Ascending aorta (tissue), 2 donors: ENCODE measurements at regions of chr19 and their contacts with region 1.

Region 1: GRCh38 chr19:49210108-49210900 is 52.7 kb downstream of the TRPM4 start:
- DNase-seq: no peak
- H3K4me3 ChIP-seq: no peak overlapping the region
- H3K27ac ChIP-seq: no peak overlapping the region
- H3K4me1 ChIP-seq: peaks cover 0 to 3% of the 10 kb centered on the region in 2 donors
- H3K27me3 ChIP-seq: no peaks in the 10 kb centered on the region
- CTCF ChIP-seq: no peak

Region 2: GRCh38 chr19:49017666-49018351 is 192.5 kb before region 1 on chr19:
- intact Hi-C with region 1: no loop called
- DNase-seq: peak in 1 of 2 donors; percentile 77
- H3K4me3 ChIP-seq: peak overlapping the region; percentile 56 to 65
- H3K27ac ChIP-seq: no peak overlapping the region
- H3K4me1 ChIP-seq: peaks cover 8 to 18% of the 10 kb centered on the region in 2 donors
- H3K27me3 ChIP-seq: peaks cover 9% of the 10 kb centered on the region
- CTCF ChIP-seq: peak; percentile 34 to 56 (median 39)

Region 3: GRCh38 chr19:49073514-49074378 is 136.6 kb before region 1 on chr19:
- intact Hi-C with region 1: loop called (anchors 1 kb)
- DNase-seq: no peak
- H3K4me3 ChIP-seq: no peak overlapping the region
- H3K27ac ChIP-seq: no peak overlapping the region
- H3K4me1 ChIP-seq: no peaks in the 10 kb centered on the region
- H3K27me3 ChIP-seq: peaks cover 14% of the 10 kb centered on the region
- CTCF ChIP-seq: no peak

Region 4: DNA sequence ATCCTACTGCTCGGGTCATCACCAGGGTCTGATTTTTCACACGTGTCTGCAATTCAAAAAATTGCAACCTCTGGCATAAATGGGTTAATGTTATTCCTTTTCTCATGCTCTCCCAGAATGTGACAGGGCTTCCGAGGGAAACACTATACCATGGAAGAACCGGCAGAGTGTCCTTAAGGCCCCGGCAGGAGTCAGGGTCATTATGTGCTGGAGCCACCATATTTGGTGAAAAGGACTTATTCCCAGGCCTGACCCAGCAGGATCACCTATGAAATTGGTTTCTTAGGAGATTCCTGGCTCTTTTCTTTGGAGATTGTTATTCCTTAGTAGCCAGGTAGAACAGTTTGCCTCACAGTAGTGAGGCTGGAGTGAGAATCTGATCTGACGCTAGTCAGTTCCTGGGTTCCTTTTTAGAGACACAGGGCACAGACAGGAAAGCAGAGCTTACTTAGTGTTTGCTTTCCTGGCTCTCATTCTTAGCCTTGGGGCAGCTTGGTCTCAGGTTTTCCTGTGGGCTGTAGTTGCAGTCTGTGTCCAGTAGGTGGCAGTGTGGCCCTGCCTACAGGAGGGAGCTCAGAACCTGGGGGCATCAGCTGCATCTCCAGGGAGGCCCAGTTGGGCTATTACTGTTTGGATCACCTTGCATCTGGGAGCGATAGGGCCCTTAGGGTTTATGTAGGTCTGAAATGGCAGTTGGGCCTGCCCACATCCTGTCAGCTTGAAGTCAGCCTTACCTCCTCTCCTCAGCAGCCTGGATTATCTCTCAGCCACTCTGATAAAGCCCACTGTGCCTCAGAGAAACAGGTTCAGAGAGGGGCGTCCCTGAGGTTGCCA is 112.6 kb before region 1 on chr19:
- intact Hi-C with region 1: loop called (anchors 2 kb)
- DNase-seq: peak in 1 of 2 donors; percentile 80
- H3K4me3 ChIP-seq: no peak overlapping the region
- H3K27ac ChIP-seq: no peak overlapping the region
- H3K4me1 ChIP-seq: no peaks in the 10 kb centered on the region
- H3K27me3 ChIP-seq: no peaks in the 10 kb centered on the region
- CTCF ChIP-seq: peak; percentile 95 to 99 (median 98)